Sigmoid colon (tissue), 7 donors: ENCODE measurements at regions of chr18 and their contacts with region 1.

Region 1: GRCh38 chr18:32919799-32920198 is 147.0 kb upstream of the KLHL14 start:
- DNase-seq: no peak
- H3K4me3 ChIP-seq: no peak overlapping the region
- H3K27ac ChIP-seq: no peak overlapping the region
- H3K4me1 ChIP-seq: no peaks in the 10 kb centered on the region
- H3K27me3 ChIP-seq: no peaks in the 10 kb centered on the region
- CTCF ChIP-seq: no peak
- EP300 ChIP-seq: no peak
- POLR2A ChIP-seq: no peak

Region 2: DNA sequence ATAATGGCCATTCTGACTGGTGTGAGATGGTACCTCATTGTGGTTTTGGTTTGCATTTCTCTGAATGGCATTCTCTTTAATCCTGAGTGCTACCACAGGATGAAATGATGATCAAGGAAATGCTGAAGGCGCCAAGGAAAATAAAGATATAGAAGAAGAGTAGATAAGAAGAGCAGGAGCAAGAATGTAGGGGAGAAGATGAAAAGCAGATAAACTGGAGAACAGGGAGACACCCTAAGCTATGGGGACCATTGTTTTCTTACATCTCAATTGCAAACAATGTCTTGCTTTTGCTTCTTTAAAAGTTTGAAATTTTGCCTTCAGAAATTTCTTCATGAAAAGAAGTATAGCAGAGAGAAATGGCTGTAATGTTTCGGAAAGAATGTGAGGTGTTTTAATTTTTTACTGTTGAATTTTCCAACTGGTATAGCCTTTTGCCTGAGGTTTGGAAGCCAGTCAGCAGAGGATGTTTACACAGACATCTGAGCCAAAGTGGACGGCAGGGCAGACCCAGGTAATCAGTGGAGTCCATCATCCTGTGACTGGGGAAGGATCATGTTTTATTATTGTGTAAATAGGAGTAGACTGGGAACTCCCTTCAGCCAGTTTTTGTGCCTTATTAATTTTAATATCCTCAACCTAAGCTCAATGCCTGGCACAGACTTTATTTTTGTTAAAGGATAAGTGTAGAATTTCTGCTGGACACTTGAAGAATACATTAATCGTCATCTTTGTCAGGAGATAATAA is 307.3 kb before region 1 on chr18:
- intact Hi-C with region 1: no loop called
- DNase-seq: no peak
- H3K4me3 ChIP-seq: no peak overlapping the region
- H3K27ac ChIP-seq: no peak overlapping the region
- H3K4me1 ChIP-seq: no peaks in the 10 kb centered on the region
- H3K27me3 ChIP-seq: no peaks in the 10 kb centered on the region
- CTCF ChIP-seq: no peak
- EP300 ChIP-seq: no peak
- POLR2A ChIP-seq: no peak

Region 3: GRCh38 chr18:32714571-32715148 is 205.1 kb before region 1 on chr18:
- intact Hi-C with region 1: loop called (anchors 10 kb)
- DNase-seq: no peak
- H3K4me3 ChIP-seq: no peak overlapping the region
- H3K27ac ChIP-seq: no peak overlapping the region
- H3K4me1 ChIP-seq: no peaks in the 10 kb centered on the region
- H3K27me3 ChIP-seq: no peaks in the 10 kb centered on the region
- CTCF ChIP-seq: peak; percentile 38 to 69 (median 50)
- EP300 ChIP-seq: no peak
- POLR2A ChIP-seq: no peak

Region 4: GRCh38 chr18:32803568-32803967 is 116.2 kb before region 1 on chr18:
- intact Hi-C with region 1: no loop called
- DNase-seq: no peak
- H3K4me3 ChIP-seq: no peak overlapping the region
- H3K27ac ChIP-seq: no peak overlapping the region
- H3K4me1 ChIP-seq: no peaks in the 10 kb centered on the region
- H3K27me3 ChIP-seq: no peaks in the 10 kb centered on the region
- CTCF ChIP-seq: no peak
- EP300 ChIP-seq: no peak
- POLR2A ChIP-seq: no peak